ENCODE measurements at regions of chr3 and their contacts with region 1.

Region 1: DNA sequence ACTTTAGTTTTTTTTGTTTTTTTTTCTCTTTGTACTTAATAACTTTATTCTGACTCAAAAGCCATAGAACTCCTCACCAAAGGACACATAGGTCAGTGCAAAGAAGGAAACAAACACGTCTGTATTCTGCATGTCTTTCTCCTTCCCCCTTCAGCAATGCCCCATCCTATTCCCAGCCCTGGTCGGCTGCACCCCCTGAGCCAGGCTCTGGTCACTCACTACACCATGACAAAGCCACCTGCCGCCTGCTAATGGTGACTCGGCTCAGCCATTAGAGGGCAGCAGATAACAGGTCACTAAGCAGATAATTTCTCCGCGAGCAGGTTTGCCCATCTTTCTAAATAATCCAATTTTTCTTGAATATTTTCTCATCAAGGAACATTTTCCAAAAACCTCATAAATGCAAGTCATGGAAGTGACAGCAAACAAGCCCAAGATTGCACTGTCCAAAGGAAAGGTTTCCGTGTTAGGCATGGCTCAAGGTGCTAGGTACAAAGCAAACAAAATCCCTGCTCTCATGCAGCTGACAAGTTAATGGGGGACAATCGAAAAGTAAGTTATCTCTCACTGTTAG is 37.8 kb downstream of the TM4SF4 start:
- DNase-seq: no peak
- H3K4me3 Mint-ChIP-seq: no peak overlapping the region
- H3K27ac Mint-ChIP-seq: no peak overlapping the region
- H3K4me1 Mint-ChIP-seq: peaks cover 12% of the 10 kb centered on the region
- H3K27me3 Mint-ChIP-seq: peaks cover 24% of the 10 kb centered on the region

Region 2: GRCh38 chr3:149717391-149718056 is 205.2 kb after region 1 on chr3:
- intact Hi-C with region 1: loop called (anchors 5 kb)
- DNase-seq: no peak
- H3K4me3 Mint-ChIP-seq: no peak overlapping the region
- H3K27ac Mint-ChIP-seq: no peak overlapping the region
- H3K4me1 Mint-ChIP-seq: peaks cover 10% of the 10 kb centered on the region
- H3K27me3 Mint-ChIP-seq: no peaks in the 10 kb centered on the region

Measured in activated T-helper 2 cell treated with anti-CD3 and anti-CD28 coated beads, Interferon-gamma antibody, Interleukin-2, Interleukin-4, amounts not matched to agents 10 μg/mL and 5 μg/mL and 100 μg/mL, durations not matched to agents 14 hours and 24 hours and 36 hours (primary cell).